Colonic mucosa (tissue), 4 donors: ENCODE measurements at regions of chr2 and their contacts with region 1.

Region 1: DNA sequence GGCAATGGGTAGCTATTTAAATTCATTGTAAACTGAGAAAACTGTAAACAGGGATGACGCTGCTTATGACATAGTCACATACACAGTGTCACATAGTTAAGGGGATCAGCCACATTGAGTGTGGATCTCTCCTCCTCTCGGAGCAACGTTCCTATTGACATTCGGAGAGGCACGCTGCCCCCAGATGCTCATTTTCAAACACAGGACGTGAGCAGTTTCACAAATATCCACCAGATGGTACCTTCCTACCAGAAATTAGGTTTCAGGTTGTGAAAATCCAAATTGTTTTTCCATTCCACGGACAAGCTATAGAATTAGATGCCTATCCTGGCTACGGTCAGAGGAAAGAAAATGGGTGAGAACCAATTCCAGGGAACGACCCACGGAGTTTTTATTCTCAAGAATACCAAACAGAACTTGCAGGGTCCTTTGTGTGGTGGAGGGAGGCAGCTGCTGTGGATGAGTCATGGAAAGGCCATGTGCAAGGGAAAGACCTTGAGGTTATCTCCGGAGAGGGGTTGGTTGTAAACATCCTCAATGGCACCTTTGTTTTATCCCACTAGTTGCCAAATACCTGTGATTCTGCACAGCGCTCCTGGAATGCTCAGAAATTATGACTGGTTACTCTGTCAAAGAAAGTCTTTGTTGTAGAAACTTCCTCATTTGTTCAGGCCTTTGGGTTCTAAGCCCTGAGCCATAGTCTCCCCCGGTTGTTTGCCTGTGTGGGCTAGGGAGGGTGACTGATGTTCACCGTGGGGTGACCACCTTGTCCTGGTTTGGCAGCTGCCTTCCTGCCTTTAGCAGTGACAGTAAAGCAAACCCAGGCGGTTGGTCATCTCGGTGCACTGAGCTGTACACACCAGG is 88.0 kb downstream of the ACTR3 start:
- DNase-seq: peak; percentile 44
- H3K4me3 ChIP-seq: no peak overlapping the region
- H3K27ac ChIP-seq: peak overlapping the region; percentile 1
- H3K4me1 ChIP-seq: no peaks in the 10 kb centered on the region
- H3K27me3 ChIP-seq: no peaks in the 10 kb centered on the region
- CTCF ChIP-seq: peak; percentile 14

Region 2: DNA sequence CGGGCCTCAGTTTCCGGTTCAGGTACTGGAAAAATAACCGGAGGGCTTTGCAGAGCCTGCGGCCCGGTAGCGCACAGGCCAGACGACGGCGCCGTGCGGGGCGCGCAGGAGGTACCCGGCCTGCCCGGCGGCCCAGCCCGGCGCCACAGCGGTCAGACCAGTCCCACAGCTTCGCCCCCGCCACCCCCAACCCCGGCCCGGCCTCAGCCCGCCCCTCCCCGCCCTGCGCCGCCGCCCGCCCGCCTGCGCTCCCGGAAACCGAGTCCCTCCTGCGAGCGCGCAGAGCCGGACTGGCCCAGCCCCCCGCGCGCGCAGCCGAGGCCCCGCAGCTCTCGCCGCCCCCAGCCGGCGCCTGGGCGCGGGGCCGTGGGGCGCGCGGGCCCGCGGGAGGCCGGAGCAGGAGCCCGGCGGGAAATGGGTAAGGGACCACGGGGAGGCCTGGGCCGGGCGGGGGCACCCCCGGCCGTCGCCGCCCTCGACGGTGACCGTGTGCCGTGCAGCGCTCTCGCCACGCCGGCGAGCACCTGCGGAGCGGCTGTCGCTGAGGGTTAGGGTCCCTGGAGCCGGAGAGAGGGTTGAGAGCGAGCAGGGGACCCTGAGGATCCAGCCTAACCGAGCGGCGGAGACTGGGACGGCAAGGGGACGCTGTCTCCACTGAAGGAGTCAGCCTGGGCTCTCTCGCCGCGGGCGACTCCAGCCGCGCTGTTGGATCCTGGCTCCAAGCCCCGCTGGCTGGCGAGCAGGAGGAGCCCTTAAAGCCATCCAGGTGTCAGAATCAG is 820.6 kb before region 1 on chr2:
- intact Hi-C with region 1: no loop called
- DNase-seq: peak; percentile 76
- H3K4me3 ChIP-seq: peak overlapping the region; percentile 72
- H3K27ac ChIP-seq: peak overlapping the region; percentile 79
- H3K4me1 ChIP-seq: peaks cover 6% of the 10 kb centered on the region
- H3K27me3 ChIP-seq: no peaks in the 10 kb centered on the region
- CTCF ChIP-seq: no peak

Region 3: DNA sequence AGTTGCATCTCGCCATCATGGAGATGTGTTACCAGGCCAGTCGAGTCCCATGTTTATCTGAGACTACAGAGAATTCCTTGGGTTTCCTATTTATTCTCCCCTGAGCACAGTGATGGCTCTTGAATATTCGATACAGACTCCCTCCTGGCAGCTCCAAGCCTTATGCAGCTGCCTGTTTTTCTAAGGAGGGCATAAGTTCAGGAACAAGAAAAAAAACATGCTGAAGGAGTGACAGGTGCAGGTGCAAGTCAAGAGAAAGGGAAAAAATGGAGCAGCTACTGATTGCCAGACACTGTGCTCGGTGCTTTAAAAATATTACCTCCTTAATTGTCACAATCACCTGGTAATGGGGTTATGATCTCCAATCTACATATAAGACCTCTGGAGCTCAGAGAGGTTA is 287.4 kb after region 1 on chr2:
- intact Hi-C with region 1: no loop called
- DNase-seq: no peak
- H3K4me3 ChIP-seq: no peak overlapping the region
- H3K27ac ChIP-seq: no peak overlapping the region
- H3K4me1 ChIP-seq: no peaks in the 10 kb centered on the region
- H3K27me3 ChIP-seq: no peaks in the 10 kb centered on the region
- CTCF ChIP-seq: no peak

Region 4: GRCh38 chr2:114550895-114551793 is 573.3 kb after region 1 on chr2:
- intact Hi-C with region 1: loop called (anchors 5 kb)
- DNase-seq: peak; percentile 78
- H3K4me3 ChIP-seq: no peak overlapping the region
- H3K27ac ChIP-seq: no peak overlapping the region
- H3K4me1 ChIP-seq: peaks cover 4% of the 10 kb centered on the region
- H3K27me3 ChIP-seq: no peaks in the 10 kb centered on the region
- CTCF ChIP-seq: peak; percentile 57